ENCODE measurements at regions of chr7 and their contacts with region 1.

Region 1: DNA sequence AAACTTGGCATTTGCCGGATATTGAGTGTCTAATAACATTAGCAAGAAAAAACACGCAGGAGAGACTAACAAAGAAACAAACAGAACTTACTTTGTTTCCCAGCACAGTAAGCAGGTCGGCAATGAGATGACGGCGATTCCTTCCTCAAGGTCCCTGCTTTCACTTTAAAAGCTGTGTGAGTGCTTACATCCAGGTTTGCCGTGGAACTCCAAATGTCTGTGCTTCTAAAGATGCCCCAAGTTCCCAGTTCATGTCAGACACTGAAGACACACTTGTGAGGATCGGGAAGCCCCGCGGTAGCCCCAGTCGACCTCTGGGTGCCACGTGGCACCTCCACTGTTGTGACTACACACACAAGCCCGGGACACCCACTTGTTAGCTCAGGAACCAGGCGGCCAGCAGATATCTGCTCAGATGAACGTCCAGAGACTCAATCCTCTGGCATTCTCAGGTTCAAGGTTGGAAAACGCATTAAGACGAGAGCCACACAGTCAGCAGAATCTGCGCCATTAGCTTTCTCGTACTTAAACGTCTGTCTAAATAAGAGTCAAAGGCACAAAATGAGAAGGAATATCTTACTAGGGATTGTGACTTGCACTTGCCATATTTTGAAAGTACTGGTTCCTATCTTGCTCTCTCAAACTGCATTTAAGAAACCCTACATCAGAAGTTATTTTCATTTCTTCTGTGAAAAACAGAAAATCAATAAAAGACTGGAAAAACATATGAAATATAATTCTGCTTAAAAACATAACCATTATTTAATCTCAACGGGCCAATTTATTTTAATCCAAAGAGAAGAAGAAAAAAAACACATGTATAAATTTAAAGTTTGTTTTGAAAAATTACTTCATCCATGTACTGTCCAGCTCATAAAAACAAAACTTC is 207.6 kb upstream of the KLF14 start:
- DNase-seq: peak; percentile 54
- ATAC-seq: peak; percentile 7
- H3K4me3 Mint-ChIP-seq: peak overlapping the region; percentile 67
- H3K27ac Mint-ChIP-seq: peak overlapping the region; percentile 88
- H3K4me1 Mint-ChIP-seq: peaks cover 90% of the 10 kb centered on the region
- H3K27me3 Mint-ChIP-seq: no peaks in the 10 kb centered on the region

Region 2: GRCh38 chr7:130929896-130930659 is 11.5 kb before region 1 on chr7:
- CTCF ChIA-PET with region 1: interaction called, 17 read pairs
- POLR2A ChIA-PET with region 1: interaction called, 10 read pairs
- intact Hi-C with region 1: no loop called
- DNase-seq: no peak
- ATAC-seq: peak; percentile 30
- H3K4me3 Mint-ChIP-seq: peak overlapping the region; percentile 9
- H3K27ac Mint-ChIP-seq: peak overlapping the region; percentile 91
- H3K4me1 Mint-ChIP-seq: peaks cover 92% of the 10 kb centered on the region
- H3K27me3 Mint-ChIP-seq: no peaks in the 10 kb centered on the region